ENCODE measurements at regions of chr16 and their contacts with region 1.

Region 1: GRCh38 chr16:48535831-48536613 is 74.0 kb downstream of the N4BP1 start:
- DNase-seq: no peak
- ATAC-seq: peak; percentile 17 to 41 (median 26)
- H3K4me3 ChIP-seq: no peak overlapping the region
- H3K27ac ChIP-seq: peak overlapping the region; percentile 0 to 44 (median 33)
- H3K4me1 ChIP-seq: peaks cover 0 to 20% (median 0%) of the 10 kb centered on the region in 4 donors
- H3K27me3 ChIP-seq: no peaks in the 10 kb centered on the region
- CTCF ChIP-seq: no peak
- POLR2A ChIP-seq: no peak

Region 2: GRCh38 chr16:48250520-48251278 is 285.3 kb before region 1 on chr16:
- intact Hi-C with region 1: loop called in 1 of 2 experiments (anchors 10 kb)
- DNase-seq: no peak
- ATAC-seq: peak in 1 of 4 donors; percentile 41
- H3K4me3 ChIP-seq: no peak overlapping the region
- H3K27ac ChIP-seq: peak overlapping the region in 1 of 3 donors; percentile 59
- H3K4me1 ChIP-seq: peaks cover 0 to 40% (median 21%) of the 10 kb centered on the region in 4 donors
- H3K27me3 ChIP-seq: no peaks in the 10 kb centered on the region
- CTCF ChIP-seq: no peak
- POLR2A ChIP-seq: no peak

Region 3: DNA sequence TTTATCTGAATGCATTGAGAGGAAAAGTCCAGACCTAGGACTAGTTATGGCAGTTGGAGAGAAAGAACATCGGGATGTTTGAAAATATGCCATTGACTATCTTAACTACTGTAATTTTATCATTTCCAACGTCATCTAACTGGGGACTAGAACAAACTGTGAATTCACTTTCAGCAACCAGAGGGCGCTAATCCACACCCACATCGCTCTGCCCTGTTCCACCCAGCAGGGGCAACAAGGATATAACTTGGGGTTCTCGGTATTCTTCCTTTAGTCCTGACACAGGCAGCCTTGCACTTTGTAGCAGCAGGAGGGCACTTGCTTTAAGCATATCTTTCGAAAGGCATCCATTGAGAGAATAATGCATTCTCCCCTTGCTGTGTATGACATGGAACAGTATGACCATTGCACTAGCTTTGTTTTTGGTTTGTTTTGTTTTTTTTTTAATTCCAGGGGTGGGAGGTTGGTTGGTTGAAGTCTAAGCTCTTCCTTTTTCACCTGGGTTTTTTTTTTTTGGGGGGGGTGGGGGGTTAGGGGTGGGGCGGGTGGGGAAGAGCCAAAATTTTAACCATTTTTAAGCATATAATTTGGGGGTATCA is 182.4 kb before region 1 on chr16:
- intact Hi-C with region 1: loop called (anchors 10 kb)
- DNase-seq: no peak
- ATAC-seq: peak; percentile 80 to 89 (median 84)
- H3K4me3 ChIP-seq: no peak overlapping the region
- H3K27ac ChIP-seq: no peak overlapping the region
- H3K4me1 ChIP-seq: no peaks in the 10 kb centered on the region
- H3K27me3 ChIP-seq: no peaks in the 10 kb centered on the region
- CTCF ChIP-seq: peak; percentile 76 to 90 (median 88)
- POLR2A ChIP-seq: no peak

Region 4: DNA sequence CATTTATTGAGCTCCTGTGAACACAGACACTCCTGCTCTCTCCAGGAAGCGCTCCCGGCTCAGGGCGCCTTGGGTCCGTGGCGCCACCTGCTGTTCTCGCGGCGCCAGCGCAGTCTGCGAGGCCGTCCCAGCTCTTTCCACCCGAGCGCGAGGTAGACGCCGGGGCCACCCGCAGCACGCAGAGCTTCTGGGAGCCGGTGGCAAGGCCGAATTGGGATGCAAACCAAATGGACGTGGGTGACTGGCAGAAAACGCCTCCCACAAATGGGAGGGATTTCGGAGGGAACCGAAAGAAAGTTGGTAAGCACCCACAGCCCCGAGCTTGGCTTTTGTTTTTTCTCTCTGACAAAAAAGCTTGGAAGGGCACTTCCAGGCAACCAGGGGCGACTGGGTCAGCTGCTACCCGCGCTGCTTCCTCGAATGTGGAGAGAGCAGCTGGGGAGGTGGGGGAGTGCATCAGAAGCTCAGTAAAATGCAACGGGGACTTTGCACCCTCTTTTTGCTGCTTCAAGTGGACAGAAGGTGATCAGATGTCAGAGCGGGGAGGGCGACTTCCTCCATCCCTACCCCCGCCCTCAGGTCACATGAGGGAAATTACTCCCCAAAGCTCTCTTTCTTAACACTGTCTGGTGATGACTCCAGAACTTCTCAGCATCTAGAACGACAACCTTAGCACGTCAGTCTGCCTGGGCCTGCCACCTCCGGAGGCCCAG is 87.4 kb after region 1 on chr16:
- intact Hi-C with region 1: loop called in 1 of 2 experiments (anchors 5 kb)
- DNase-seq: peak; percentile 91 to 94 (median 92)
- ATAC-seq: peak; percentile 98 to 100 (median 98)
- H3K4me3 ChIP-seq: peak overlapping the region; percentile 42 to 62 (median 58)
- H3K27ac ChIP-seq: peak overlapping the region; percentile 88 to 92 (median 89)
- H3K4me1 ChIP-seq: peaks cover 0 to 6% (median 2%) of the 10 kb centered on the region in 4 donors
- H3K27me3 ChIP-seq: no peaks in the 10 kb centered on the region
- CTCF ChIP-seq: peak; percentile 99 to 100 (median 99)
- POLR2A ChIP-seq: peak; percentile 41